ENCODE measurements at regions of chr6 and their contacts with region 1.

Region 1: GRCh38 chr6:68657374-68658139 is 22.5 kb downstream of the ADGRB3 start:
- DNase-seq: peak in 2 of 4 experiments; percentile 37 to 69
- ATAC-seq: peak; percentile 56
- H3K4me3 ChIP-seq: no peak overlapping the region
- H3K27ac ChIP-seq: peak overlapping the region; percentile 88; the same call in 2 of the 3 replicates
- H3K4me1 ChIP-seq: peaks cover 0 to 14% of the 10 kb centered on the region in 2 experiments; a peak in 3 of 5 replicates
- H3K27me3 ChIP-seq: no peaks in the 10 kb centered on the region
- CTCF ChIP-seq: peak in 2 of 3 experiments; percentile 28 to 43; a peak in 2 of 6 replicates
- EP300 ChIP-seq: no peak
- POLR2A ChIP-seq: no peak
- RAD21 ChIP-seq: no peak

Region 2: DNA sequence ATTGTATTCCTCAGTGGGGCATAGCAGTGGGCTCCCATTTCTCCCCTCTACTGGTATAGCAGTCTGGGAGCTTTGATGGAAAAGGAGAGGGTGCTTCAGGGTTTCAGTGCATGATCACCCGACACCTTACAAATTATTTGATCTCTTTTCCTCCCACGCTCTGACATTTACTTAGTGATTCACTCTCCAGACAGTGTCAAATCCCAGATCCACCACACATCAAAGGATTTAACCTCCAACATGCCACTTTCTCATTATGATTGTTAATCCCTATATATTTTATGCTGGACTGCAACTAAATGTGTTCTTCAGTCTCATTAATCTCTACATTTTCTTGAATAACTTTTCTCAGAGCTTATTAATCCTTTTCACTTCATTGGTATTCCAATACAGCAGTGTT is 263.9 kb before region 1 on chr6:
- CTCF ChIA-PET with region 1: no interaction called
- POLR2A ChIA-PET with region 1: no interaction called
- in situ Hi-C with region 1: no loop called
- intact Hi-C with region 1: no loop called
- DNase-seq: no peak
- ATAC-seq: no peak
- H3K4me3 ChIP-seq: no peak overlapping the region
- H3K27ac ChIP-seq: no peak overlapping the region
- H3K4me1 ChIP-seq: no peaks in the 10 kb centered on the region
- H3K27me3 ChIP-seq: no peaks in the 10 kb centered on the region
- CTCF ChIP-seq: no peak
- EP300 ChIP-seq: no peak
- POLR2A ChIP-seq: no peak
- RAD21 ChIP-seq: no peak

Region 3: GRCh38 chr6:68639826-68640490 is 17.6 kb before region 1 on chr6:
- CTCF ChIA-PET with region 1: no interaction called
- POLR2A ChIA-PET with region 1: interaction called, 13 read pairs
- in situ Hi-C with region 1: no loop called
- intact Hi-C with region 1: loop called (anchors 1 kb)
- DNase-seq: peak in 2 of 4 experiments; percentile 66 to 71
- ATAC-seq: peak; percentile 45
- H3K4me3 ChIP-seq: peak overlapping the region; percentile 31
- H3K27ac ChIP-seq: peak overlapping the region; percentile 61
- H3K4me1 ChIP-seq: peaks cover 3 to 23% of the 10 kb centered on the region in 2 experiments; a peak in 4 of 5 replicates
- H3K27me3 ChIP-seq: no peaks in the 10 kb centered on the region
- CTCF ChIP-seq: peak in 1 of 3 experiments; percentile 5; a peak in 1 of 6 replicates
- EP300 ChIP-seq: peak; percentile 46; the same call in 1 of the 2 replicates
- POLR2A ChIP-seq: no peak
- RAD21 ChIP-seq: no peak; a peak in 1 of 4 replicates

Region 4: DNA sequence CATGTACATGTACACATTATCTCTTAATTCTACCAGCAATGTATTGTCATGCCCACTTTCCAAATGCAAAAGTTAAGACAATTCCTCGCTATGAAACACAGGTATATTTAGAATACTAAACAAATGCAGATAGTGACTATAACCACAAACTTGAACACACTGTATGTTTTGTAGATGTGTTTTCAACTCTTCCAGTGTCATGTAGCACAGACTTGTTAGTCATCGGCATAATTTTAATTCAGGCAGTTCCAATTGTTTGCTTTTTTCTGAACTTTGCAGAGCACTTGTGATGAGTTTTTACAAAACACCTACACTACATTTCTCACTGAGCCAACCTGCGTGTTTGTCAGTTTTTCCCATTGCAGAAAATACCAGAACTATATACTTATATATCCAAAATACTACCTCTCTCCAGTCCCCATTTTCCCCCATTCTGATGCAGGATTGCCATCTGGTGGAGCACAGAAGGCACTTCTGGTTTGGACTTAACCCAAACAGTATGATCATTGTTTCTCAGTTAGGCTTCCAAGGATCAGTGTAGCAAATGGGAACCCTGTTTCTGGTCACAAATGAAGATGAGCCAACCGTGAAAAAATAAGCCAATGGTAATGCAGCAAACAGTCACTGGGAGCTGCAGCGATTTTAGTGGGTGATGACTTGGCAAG is 120.9 kb after region 1 on chr6:
- CTCF ChIA-PET with region 1: no interaction called
- POLR2A ChIA-PET with region 1: no interaction called
- in situ Hi-C with region 1: no loop called
- intact Hi-C with region 1: no loop called
- DNase-seq: peak; percentile 36 to 76 (median 47)
- ATAC-seq: peak; percentile 87
- H3K4me3 ChIP-seq: no peak overlapping the region
- H3K27ac ChIP-seq: no peak overlapping the region
- H3K4me1 ChIP-seq: 0 out of 5 replicates have a peak, but pooled peaks cover 0 to 3% of the 10 kb centered on the region in 2 experiments
- H3K27me3 ChIP-seq: no peaks in the 10 kb centered on the region
- CTCF ChIP-seq: peak; percentile 78 to 93 (median 86)
- EP300 ChIP-seq: no peak
- POLR2A ChIP-seq: no peak
- RAD21 ChIP-seq: peak; percentile 97

Measured in K562 (cell line).